Caco-2 (cell line): ENCODE measurements at regions of chr13 and their contacts with region 1.

Region 1: DNA sequence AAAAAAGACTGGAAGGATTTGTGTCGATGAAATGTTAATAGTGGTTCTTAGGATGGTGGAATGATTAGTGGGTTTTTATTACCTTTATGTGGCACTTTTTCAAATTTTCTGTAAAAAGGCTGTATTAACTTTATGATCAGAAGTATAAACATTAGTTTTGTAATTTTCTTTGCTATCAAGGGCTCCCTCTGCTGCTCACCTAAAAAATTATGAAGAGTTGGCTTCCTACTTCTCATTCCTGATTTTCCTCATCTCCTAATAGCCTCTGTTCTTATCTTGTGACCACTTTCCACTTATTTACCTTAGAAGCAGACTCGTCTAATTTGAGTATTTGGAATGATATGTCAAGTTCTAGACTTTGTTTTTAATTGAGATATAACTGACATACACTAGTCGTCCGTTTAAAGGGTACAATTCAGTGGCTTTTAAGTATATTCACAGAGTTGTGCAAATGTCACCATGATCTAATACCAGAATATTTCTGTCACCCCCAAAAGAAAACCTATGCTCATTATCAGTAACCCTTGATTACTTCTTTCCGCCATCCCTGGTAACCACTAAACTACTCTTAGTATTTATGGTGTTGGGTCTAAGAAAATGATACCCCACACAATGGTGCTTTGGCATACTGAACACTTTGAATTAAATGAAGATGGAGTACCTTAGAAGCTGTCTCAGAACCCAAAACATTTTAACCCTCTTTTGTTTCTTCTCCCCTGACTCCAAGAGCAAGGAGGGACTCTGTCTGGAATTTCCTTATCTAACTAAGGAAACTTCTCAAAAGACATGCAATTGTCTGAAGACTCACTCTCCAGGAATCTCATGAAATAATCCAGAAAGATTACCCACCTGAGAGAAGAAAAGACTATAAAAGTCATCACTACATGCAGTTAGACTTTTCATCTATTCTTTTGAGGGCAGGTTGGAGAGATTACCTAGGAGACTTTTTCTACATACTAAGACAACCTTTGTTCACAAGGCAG is 311.3 kb downstream of the DLEU7 start:
- DNase-seq: peak in 1 of 2 experiments; percentile 25
- H3K4me3 ChIP-seq: no peak overlapping the region
- H3K4me3 Mint-ChIP-seq: no peak overlapping the region
- H3K27ac Mint-ChIP-seq: no peak overlapping the region
- H3K4me1 ChIP-seq: peaks cover 7% of the 10 kb centered on the region
- H3K4me1 Mint-ChIP-seq: peaks cover 24% of the 10 kb centered on the region
- H3K27me3 ChIP-seq: no peaks in the 10 kb centered on the region
- H3K27me3 Mint-ChIP-seq: no peaks in the 10 kb centered on the region
- CTCF ChIP-seq: peak; percentile 36 to 50

Region 2: DNA sequence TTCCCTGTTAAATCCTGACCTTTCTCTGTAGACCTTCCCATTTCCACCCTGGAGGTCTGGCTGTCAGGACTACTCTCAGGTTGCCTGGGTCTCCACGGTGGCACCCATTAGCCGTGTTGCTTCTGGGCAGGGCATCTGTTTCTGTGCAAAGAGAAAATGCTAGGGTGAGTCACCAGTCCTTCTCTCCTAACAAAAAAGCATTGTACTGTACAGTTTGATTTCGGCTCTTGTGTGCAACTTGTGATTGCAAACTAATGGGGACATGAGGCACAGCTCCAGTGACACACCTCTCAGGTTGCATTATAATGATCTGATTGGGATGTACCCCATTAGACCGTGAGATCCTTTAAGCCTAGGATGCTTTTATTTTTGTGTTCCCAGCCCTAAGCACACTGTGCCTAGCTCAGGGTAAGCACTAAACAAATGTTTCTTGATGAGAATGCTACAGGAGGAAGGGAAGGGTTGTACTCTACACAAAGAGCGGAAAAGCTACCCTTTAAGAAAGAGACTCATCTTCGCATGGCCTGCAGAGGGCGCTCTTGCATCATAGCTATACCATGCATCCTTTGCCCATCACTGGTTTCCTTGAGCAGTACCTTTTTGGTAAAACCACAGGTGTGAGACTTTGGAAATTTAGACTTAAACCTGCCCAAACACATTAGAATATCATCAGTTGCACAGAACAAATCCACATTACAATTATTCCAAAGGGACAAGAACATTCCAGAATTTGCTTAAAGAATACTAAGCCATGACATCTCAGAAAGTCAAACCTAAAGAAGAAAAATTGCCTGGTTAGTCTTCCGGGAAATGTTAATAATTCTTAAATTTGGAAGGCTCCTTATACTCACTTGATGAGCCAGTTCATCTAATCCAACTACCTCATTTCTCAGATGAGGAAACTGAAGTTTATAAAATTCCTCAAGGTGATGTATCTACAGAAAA is 555.6 kb before region 1 on chr13:
- CTCF ChIA-PET with region 1: no interaction called
- POLR2A ChIA-PET with region 1: no interaction called
- intact Hi-C with region 1: loop called (anchors 1 kb)
- DNase-seq: peak; percentile 56 to 71
- H3K4me3 ChIP-seq: no peak overlapping the region
- H3K4me3 Mint-ChIP-seq: no peak overlapping the region
- H3K27ac Mint-ChIP-seq: no peak overlapping the region
- H3K4me1 ChIP-seq: peaks cover 10% of the 10 kb centered on the region; the same call in 1 of the 2 replicates
- H3K4me1 Mint-ChIP-seq: peaks cover 18% of the 10 kb centered on the region
- H3K27me3 ChIP-seq: no peaks in the 10 kb centered on the region
- H3K27me3 Mint-ChIP-seq: no peaks in the 10 kb centered on the region
- CTCF ChIP-seq: peak; percentile 93 to 94

Region 3: DNA sequence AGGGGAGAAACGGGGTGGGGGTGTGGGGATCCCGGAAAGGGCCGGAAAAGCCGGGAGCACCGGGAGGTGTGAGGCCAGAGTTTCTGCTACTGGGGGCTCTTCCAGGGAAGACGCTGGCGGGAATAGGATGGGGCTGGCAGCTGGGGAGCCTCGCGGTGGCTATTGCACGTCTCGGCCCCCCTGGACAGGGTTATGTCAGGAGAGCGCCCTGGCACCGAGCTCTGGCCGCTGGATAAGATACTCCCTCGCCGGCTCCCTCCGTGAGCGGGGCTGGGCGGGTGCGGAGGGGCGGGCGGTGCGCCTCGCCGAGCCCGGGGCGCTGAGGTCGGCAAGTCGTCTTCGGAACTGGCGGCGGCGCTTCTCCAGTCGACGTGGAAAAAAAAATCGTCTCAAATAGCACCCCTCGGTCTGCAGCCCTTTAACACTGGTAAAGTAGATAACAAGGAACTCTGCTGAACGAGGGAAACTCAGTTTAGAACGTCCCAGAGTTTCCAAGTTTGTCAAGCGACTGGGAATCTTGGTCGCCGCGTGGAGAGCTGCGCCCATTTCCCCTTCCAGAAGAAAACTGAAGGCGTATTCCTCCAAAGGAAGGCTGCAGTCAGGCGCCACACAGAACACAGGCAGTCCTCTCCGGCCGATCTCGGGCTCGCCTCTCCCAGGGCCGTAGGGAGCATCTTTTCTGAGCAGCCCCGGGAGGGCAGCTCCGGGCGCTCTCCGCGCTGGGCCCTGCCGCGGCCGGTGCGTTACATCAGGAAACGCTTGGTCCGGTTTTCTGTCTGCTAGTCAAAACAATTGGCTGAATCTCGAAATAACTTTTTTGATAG is 401.9 kb before region 1 on chr13:
- CTCF ChIA-PET with region 1: no interaction called
- POLR2A ChIA-PET with region 1: no interaction called
- intact Hi-C with region 1: loop called (anchors 5 kb)
- DNase-seq: peak; percentile 47 to 60
- H3K4me3 ChIP-seq: peak overlapping the region; percentile 40
- H3K4me3 Mint-ChIP-seq: peak overlapping the region; percentile 84
- H3K27ac Mint-ChIP-seq: no peak overlapping the region
- H3K4me1 ChIP-seq: peaks cover 12% of the 10 kb centered on the region
- H3K4me1 Mint-ChIP-seq: peaks cover 8% of the 10 kb centered on the region
- H3K27me3 ChIP-seq: no peaks in the 10 kb centered on the region
- H3K27me3 Mint-ChIP-seq: no peaks in the 10 kb centered on the region
- CTCF ChIP-seq: no peak

Region 4: DNA sequence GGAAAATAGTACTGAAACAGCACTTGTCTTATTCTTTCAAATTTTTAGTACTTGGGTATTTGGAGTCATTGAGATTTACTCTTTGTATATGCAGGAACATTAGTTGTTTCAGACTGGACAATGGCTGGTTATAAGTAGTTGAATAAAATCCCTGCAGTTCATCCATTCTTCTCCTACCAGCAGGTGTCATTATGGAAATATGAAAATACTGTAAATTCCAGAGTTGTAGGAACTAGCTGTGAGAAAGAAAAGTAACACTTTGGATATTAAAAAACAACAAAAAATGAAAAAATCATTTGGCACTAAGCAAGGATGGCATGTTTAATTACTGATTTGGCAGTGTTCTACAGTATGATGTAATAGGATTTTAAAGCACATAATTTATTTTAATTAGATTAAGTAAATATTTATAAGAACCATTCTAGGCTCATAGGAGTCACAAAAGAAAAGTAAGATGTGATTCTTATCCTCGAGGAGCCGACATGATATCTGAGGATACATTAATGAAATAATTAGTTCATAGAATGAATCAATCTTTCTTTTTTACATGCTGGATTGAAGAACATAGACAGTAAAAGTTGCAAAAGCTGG is 361.7 kb before region 1 on chr13:
- CTCF ChIA-PET with region 1: no interaction called
- POLR2A ChIA-PET with region 1: no interaction called
- intact Hi-C with region 1: loop called (anchors 2 kb)
- DNase-seq: no peak
- H3K4me3 ChIP-seq: no peak overlapping the region
- H3K4me3 Mint-ChIP-seq: no peak overlapping the region
- H3K27ac Mint-ChIP-seq: no peak overlapping the region
- H3K4me1 ChIP-seq: no peaks in the 10 kb centered on the region
- H3K4me1 Mint-ChIP-seq: no peaks in the 10 kb centered on the region
- H3K27me3 ChIP-seq: no peaks in the 10 kb centered on the region
- H3K27me3 Mint-ChIP-seq: no peaks in the 10 kb centered on the region
- CTCF ChIP-seq: peak in 1 of 2 experiments; percentile 39

Region 5: GRCh38 chr13:50376895-50377575 is 155.2 kb before region 1 on chr13:
- CTCF ChIA-PET with region 1: no interaction called
- POLR2A ChIA-PET with region 1: no interaction called
- intact Hi-C with region 1: loop called (anchors 1 kb)
- DNase-seq: peak; percentile 39 to 44
- H3K4me3 ChIP-seq: no peak overlapping the region
- H3K4me3 Mint-ChIP-seq: no peak overlapping the region
- H3K27ac Mint-ChIP-seq: no peak overlapping the region
- H3K4me1 ChIP-seq: peaks cover 12% of the 10 kb centered on the region; the same call in 1 of the 2 replicates
- H3K4me1 Mint-ChIP-seq: peaks cover 13% of the 10 kb centered on the region
- H3K27me3 ChIP-seq: no peaks in the 10 kb centered on the region
- H3K27me3 Mint-ChIP-seq: no peaks in the 10 kb centered on the region
- CTCF ChIP-seq: peak in 1 of 2 experiments; percentile 20

Region 6: GRCh38 chr13:50911937-50912795 is 380.0 kb after region 1 on chr13:
- CTCF ChIA-PET with region 1: no interaction called
- POLR2A ChIA-PET with region 1: no interaction called
- intact Hi-C with region 1: loop called (anchors 5 kb)
- DNase-seq: peak; percentile 87 to 89
- H3K4me3 ChIP-seq: no peak overlapping the region
- H3K4me3 Mint-ChIP-seq: peak overlapping the region; percentile 55
- H3K27ac Mint-ChIP-seq: peak overlapping the region; percentile 55
- H3K4me1 ChIP-seq: peaks cover 13% of the 10 kb centered on the region
- H3K4me1 Mint-ChIP-seq: peaks cover 25% of the 10 kb centered on the region
- H3K27me3 ChIP-seq: no peaks in the 10 kb centered on the region
- H3K27me3 Mint-ChIP-seq: no peaks in the 10 kb centered on the region
- CTCF ChIP-seq: peak; percentile 88 to 92